ENCODE measurements at regions of chr5 and their contacts with region 1.

Region 1: DNA sequence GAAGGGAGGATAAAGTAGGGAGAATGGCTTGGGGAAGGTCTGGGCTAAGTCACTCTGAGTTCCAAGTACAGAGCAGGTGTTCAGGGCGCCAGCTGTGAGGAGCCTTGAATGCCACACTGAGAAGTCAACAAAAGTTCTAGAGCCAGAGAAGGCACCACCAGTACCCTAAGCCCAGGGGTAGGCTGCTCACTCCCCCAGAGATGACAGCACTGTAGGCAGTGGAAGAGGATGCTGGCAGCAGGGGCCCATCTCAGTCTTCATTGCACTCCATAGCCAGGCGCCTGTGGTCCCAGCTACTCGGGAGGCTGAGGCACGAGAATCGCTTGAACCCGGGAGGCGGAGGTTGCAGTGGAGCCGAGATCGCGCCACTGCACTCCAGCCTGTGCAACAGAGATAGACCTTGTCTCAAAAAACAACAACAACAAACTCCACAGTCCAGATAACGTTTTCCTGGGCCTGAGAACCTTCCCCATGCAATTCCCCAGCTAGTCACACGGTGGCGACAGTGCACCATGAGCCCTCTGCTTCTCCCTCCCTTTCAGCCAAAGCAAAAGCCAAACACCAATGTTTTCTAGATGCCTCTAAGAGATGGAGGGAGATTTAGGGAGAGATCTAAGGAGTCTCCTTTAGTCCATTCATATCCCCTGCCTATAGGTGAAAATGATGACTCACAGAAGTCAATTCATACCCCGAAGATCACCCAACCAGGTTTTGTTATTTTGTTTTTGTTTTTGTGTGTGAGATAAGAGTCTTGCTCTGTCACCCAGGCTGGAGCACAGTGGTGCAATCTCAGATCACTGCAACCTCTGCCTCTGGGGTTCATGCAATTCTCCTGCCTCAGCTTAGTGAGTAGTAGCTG is 19.8 kb upstream of the NSD1 start:
- DNase-seq: peak; percentile 72 to 88
- ATAC-seq: peak; percentile 65 to 69 (median 66)
- H3K4me3 ChIP-seq: peak overlapping the region; percentile 6
- H3K27ac ChIP-seq: no peak overlapping the region
- H3K4me1 ChIP-seq: peaks cover 14% of the 10 kb centered on the region
- H3K27me3 ChIP-seq: no peaks in the 10 kb centered on the region
- CTCF ChIP-seq: peak; percentile 98

Region 2: DNA sequence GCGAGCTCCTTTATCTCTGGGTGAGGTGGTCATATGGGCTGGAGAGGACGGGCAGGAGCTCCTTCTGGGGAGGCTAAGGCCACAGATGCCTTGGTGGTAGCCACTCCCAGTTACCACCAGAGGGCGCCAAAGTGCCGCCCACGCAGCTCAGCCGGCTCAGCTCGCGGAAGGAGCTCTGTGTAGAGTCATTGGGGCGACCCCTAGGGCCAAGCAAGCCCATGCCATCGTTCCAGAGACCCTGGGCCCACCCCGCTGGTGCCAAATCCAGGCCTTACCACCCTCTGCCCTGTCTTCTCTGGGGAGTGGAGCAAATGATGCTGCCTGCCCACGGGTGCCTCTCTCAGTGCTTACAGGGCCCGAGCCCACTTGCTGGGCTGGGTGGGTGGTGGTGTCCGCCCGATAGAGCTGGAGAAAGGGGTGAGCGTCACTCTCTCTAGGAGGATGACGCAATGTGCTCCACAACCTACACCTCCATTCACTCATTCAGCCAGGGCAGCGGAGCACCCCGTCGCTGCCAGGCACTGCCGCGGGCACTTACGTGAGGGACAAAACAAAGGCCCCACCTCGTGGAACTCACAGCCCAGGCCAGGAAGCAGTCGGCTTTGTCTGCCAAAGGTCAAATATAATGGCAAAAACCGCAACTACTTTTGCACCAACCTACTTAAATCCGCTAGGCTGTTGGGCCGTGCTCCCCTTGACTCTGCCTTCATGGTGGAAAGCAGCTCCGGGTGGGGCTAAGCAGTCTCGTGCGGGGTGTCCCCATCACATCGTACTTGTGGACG is 452.7 kb before region 1 on chr5:
- intact Hi-C with region 1: loop called in 1 of 2 experiments (anchors 5 kb)
- DNase-seq: peak; percentile 70 to 86
- ATAC-seq: peak; percentile 81 to 90 (median 84)
- H3K4me3 ChIP-seq: no peak overlapping the region
- H3K27ac ChIP-seq: no peak overlapping the region
- H3K4me1 ChIP-seq: peaks cover 7% of the 10 kb centered on the region
- H3K27me3 ChIP-seq: peaks cover 0 to 29% (median 0%) of the 10 kb centered on the region in 3 donors
- CTCF ChIP-seq: peak; percentile 97

Region 3: GRCh38 chr5:176700239-176700847 is 413.5 kb before region 1 on chr5:
- intact Hi-C with region 1: no loop called
- DNase-seq: no peak
- ATAC-seq: no peak
- H3K4me3 ChIP-seq: no peak overlapping the region
- H3K27ac ChIP-seq: no peak overlapping the region
- H3K4me1 ChIP-seq: no peaks in the 10 kb centered on the region
- H3K27me3 ChIP-seq: peaks cover 0 to 68% (median 6%) of the 10 kb centered on the region in 3 donors
- CTCF ChIP-seq: no peak

Region 4: GRCh38 chr5:176875783-176876505 is 237.9 kb before region 1 on chr5:
- intact Hi-C with region 1: no loop called
- DNase-seq: no peak
- ATAC-seq: no peak
- H3K4me3 ChIP-seq: no peak overlapping the region
- H3K27ac ChIP-seq: no peak overlapping the region
- H3K4me1 ChIP-seq: no peaks in the 10 kb centered on the region
- H3K27me3 ChIP-seq: peaks cover 0 to 49% (median 6%) of the 10 kb centered on the region in 3 donors
- CTCF ChIP-seq: no peak

Region 5: GRCh38 chr5:177133091-177133852 is 19.5 kb after region 1 on chr5 and contains the start of gene NSD1:
- intact Hi-C with region 1: loop called in 1 of 2 experiments (anchors 2 kb)
- DNase-seq: peak; percentile 92 to 95
- ATAC-seq: peak; percentile 76 to 80 (median 79)
- H3K4me3 ChIP-seq: peak within 1 kb of the TSS; percentile 93
- H3K27ac ChIP-seq: peak within 1 kb of the TSS; percentile 82
- H3K4me1 ChIP-seq: peaks cover 35% of the 10 kb centered on the region
- H3K27me3 ChIP-seq: no peaks in the 10 kb centered on the region
- CTCF ChIP-seq: no peak
- total RNA-seq, gene NSD1: 38.5 to 56.2 (median 43.2) TPM

Region 6: GRCh38 chr5:177256296-177256695 is 142.5 kb after region 1 on chr5:
- intact Hi-C with region 1: loop called in 1 of 2 experiments (anchors 5 kb)
- DNase-seq: no peak
- ATAC-seq: no peak
- H3K4me3 ChIP-seq: no peak overlapping the region
- H3K27ac ChIP-seq: no peak overlapping the region
- H3K4me1 ChIP-seq: peaks cover 9% of the 10 kb centered on the region
- H3K27me3 ChIP-seq: no peaks in the 10 kb centered on the region
- CTCF ChIP-seq: no peak

Region 7: GRCh38 chr5:177454397-177455035 is 340.7 kb after region 1 on chr5:
- intact Hi-C with region 1: loop called in 1 of 2 experiments (anchors 5 kb)
- DNase-seq: peak; percentile 92 to 96
- ATAC-seq: peak; percentile 71 to 80 (median 76)
- H3K4me3 ChIP-seq: peak overlapping the region; percentile 70
- H3K27ac ChIP-seq: peak overlapping the region; percentile 79
- H3K4me1 ChIP-seq: peaks cover 15% of the 10 kb centered on the region
- H3K27me3 ChIP-seq: peaks cover 0 to 31% (median 0%) of the 10 kb centered on the region in 3 donors
- CTCF ChIP-seq: peak; percentile 91